H1 (cell line): ENCODE measurements at regions of chr15 and their contacts with region 1.

Region 1: GRCh38 chr15:77543159-77543882 is 89.4 kb downstream of the LINGO1 start:
- DNase-seq: peak; percentile 72 to 93
- H3K4me3 ChIP-seq: peak overlapping the region in 1 of 4 experiments; percentile 15; a peak in 1 of 8 replicates
- H3K27ac ChIP-seq: no peak overlapping the region
- H3K4me1 ChIP-seq: peaks cover 2 to 15% (median 6%) of the 10 kb centered on the region in 4 experiments
- H3K27me3 ChIP-seq: no peaks in the 10 kb centered on the region
- CTCF ChIP-seq: peak; percentile 64 to 96 (median 95)
- EP300 ChIP-seq: no peak
- POLR2A ChIP-seq: no peak
- RAD21 ChIP-seq: peak; percentile 99

Region 2: DNA sequence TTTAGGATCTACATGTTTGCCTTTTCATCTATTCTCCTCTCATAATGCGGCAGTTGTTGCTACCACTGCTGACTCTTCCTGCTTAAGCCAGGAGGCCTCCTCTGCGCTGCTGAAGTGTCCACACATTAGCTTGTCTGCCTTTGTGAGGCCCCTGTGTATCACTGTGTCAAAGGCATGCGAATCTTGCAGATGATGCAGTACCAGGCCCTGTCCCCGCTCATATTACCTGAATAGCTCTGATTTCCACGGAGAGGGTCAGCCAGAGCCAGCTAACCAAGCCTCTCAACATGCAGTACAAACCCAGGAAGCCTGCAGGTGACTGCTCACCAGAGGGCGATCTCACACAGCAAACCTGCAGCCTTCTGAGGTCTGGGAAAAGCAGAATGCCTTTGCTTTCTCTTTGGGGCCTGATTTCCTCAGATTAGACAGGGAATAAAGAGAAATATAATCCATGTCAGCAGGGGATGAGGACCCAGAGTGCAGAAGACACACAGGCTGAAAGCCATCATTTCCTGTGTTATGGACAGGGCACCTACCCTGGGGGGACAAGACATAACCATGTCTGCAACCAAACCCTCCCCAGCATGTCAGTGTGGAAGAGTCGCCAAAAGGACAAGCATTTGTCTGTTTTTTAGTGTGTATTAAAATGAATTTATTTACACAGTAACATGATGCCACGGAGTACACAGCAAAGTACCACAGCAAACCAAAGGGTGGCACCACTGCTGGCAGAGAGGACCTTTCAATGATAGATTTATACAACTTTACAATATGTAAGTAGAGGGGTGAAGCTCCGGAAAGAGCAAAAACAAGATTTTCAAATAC is 435.6 kb before region 1 on chr15:
- CTCF ChIA-PET with region 1: interaction called, 54 read pairs
- POLR2A ChIA-PET with region 1: no interaction called
- DNase-seq: peak; percentile 38 to 72
- H3K4me3 ChIP-seq: no peak overlapping the region
- H3K27ac ChIP-seq: no peak overlapping the region
- H3K4me1 ChIP-seq: no peaks in the 10 kb centered on the region
- H3K27me3 ChIP-seq: no peaks in the 10 kb centered on the region
- CTCF ChIP-seq: peak; percentile 88 to 93 (median 91)
- EP300 ChIP-seq: no peak
- POLR2A ChIP-seq: no peak
- RAD21 ChIP-seq: peak; percentile 93 to 96

Region 3: DNA sequence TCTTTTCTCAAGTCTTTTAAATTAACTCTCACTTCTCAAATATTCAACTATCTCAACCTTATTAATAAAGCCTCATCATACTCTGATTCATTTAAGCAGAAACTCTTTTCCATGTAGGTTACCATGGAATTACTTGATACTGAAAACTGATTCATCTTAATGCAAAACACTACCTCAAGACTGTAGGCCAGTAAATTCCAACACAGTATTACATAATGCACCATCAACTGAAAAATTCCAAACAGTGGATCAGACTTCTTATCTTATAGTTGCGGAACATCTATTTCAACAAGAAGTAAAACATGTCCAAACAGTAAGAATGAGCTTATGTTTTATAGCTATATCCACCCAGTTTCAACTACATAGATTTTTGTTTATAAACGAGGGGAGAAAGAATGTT is 247.9 kb before region 1 on chr15:
- CTCF ChIA-PET with region 1: interaction called, 10 read pairs
- POLR2A ChIA-PET with region 1: no interaction called
- DNase-seq: no peak
- H3K4me3 ChIP-seq: no peak overlapping the region
- H3K27ac ChIP-seq: no peak overlapping the region
- H3K4me1 ChIP-seq: no peaks in the 10 kb centered on the region
- H3K27me3 ChIP-seq: no peaks in the 10 kb centered on the region
- CTCF ChIP-seq: no peak
- EP300 ChIP-seq: no peak
- POLR2A ChIP-seq: no peak
- RAD21 ChIP-seq: no peak

Region 4: DNA sequence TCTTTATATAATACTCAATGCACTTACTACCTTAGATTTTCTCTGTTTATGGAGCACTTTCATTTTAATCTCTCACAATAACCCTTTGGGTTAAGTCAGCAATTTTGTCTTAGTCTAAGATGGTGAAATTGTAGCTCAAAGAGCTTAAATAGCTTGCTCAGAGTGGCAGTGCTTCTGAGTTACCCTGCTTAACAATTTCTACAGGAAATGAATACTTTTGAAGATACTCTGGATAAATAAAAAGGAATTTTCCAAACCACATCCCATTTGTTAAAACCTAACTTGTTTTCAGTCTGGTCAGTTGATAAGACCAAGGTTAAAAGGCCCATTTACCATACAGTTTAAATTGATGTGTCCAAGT is 85.4 kb before region 1 on chr15:
- CTCF ChIA-PET with region 1: no interaction called
- POLR2A ChIA-PET with region 1: no interaction called
- DNase-seq: no peak
- H3K4me3 ChIP-seq: no peak overlapping the region
- H3K27ac ChIP-seq: no peak overlapping the region
- H3K4me1 ChIP-seq: peaks cover 0 to 4% (median 0%) of the 10 kb centered on the region in 4 experiments; a peak in 1 of 7 replicates
- H3K27me3 ChIP-seq: no peaks in the 10 kb centered on the region
- CTCF ChIP-seq: no peak
- EP300 ChIP-seq: no peak
- POLR2A ChIP-seq: no peak
- RAD21 ChIP-seq: no peak

Region 5: DNA sequence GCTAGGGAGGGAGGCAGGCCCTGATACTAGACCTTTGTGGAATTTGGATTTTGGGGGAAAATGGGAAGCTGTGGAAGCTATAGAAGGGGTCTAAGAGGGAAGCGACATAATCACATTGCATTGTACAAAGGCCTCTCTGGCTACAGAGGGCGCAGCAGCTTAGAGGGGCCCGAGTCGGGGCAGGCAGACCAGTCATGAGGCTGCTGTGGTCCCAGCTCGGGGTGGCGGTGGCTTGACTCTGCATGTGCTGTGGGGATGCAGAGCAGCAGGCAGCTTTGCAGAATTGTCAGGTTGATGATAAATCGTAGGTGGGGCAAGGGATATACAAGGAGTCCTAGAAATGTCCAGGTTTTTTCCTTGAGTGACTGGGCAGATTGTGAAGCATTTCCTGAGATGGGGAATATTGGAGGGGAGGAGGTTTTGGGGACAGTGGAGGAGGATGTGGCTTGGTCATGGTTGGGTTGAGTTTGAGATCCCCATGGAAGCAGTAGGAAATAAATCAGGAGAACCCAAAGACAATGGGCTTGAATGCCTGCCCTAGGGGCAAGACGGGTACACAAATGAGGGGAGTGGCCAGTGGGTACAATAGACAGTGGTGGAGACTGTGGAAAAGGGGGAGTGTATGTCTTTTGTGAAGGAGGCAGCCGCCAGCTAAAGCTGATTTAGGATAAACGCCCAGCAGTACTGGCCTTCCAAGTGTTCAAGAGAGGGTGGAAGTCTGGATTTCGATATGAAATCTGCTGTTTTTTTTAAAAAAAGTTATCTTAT is 28.5 kb before region 1 on chr15:
- CTCF ChIA-PET with region 1: interaction called, 44 read pairs
- POLR2A ChIA-PET with region 1: interaction called, 8 read pairs
- DNase-seq: no peak
- H3K4me3 ChIP-seq: no peak overlapping the region
- H3K27ac ChIP-seq: no peak overlapping the region
- H3K4me1 ChIP-seq: peaks cover 8 to 17% (median 12%) of the 10 kb centered on the region in 4 experiments
- H3K27me3 ChIP-seq: no peaks in the 10 kb centered on the region
- CTCF ChIP-seq: peak in 2 of 3 experiments; percentile 22 to 41; a peak in 2 of 4 replicates
- EP300 ChIP-seq: no peak
- POLR2A ChIP-seq: no peak
- RAD21 ChIP-seq: peak in 1 of 2 experiments; percentile 28; a peak in 1 of 4 replicates

Region 6: DNA sequence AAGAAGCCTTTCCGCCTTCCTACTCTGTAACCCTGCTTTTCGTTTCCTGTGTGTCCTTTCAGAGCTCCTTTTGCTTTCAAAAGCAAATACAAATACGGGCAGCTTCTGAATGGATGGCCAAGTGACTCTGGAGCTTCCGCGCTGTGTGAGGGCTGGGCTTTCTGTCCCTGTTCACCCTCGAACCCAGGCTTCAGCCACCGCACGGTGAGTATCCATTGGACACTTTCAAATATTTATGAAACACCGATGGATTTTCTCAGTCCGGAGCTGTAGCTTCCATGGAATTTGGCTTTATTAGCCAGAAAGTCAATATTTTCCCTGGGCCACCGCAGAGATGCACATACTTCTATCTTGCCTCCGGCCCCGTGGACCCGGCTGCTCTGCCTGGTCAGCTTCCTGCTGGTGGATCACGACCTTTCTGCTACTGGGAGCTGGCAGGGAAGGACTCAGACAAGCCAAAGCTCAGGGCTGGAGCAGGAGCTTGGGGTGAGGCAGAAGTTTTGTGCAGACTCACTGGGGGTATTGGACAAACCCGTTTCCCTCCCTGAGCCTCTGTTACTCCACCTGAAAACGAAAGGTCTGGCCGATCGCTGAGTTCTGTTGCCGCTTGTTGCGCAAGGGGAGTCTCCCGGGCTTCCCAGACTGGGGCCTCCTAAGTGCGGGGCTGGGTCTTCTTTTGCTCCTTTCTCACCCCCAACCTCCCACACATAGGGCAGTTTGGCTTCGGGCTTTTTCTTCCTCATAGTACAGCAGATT is 25.8 kb after region 1 on chr15:
- CTCF ChIA-PET with region 1: interaction called, 28 read pairs
- POLR2A ChIA-PET with region 1: interaction called, 3 read pairs
- DNase-seq: no peak
- H3K4me3 ChIP-seq: no peak overlapping the region
- H3K27ac ChIP-seq: no peak overlapping the region
- H3K4me1 ChIP-seq: peaks cover 0 to 17% (median 11%) of the 10 kb centered on the region in 4 experiments; a peak in 6 of 7 replicates
- H3K27me3 ChIP-seq: no peaks in the 10 kb centered on the region
- CTCF ChIP-seq: no peak
- EP300 ChIP-seq: no peak
- POLR2A ChIP-seq: no peak
- RAD21 ChIP-seq: no peak